Dorsolateral prefrontal cortex (tissue), 120 donors: ENCODE measurements at regions of chr15 and their contacts with region 1.

Region 1: GRCh38 chr15:75727851-75728715 is 15.4 kb upstream of the CSPG4 start:
- DNase-seq: peak; percentile 48 to 76 (median 69)
- H3K4me3 ChIP-seq: no peak overlapping the region
- H3K27ac ChIP-seq: no peak overlapping the region
- H3K27me3 ChIP-seq: no peaks in the 10 kb centered on the region
- CTCF ChIP-seq: peak in 55 of 56 donors; percentile 21 to 72 (median 57)

Region 2: DNA sequence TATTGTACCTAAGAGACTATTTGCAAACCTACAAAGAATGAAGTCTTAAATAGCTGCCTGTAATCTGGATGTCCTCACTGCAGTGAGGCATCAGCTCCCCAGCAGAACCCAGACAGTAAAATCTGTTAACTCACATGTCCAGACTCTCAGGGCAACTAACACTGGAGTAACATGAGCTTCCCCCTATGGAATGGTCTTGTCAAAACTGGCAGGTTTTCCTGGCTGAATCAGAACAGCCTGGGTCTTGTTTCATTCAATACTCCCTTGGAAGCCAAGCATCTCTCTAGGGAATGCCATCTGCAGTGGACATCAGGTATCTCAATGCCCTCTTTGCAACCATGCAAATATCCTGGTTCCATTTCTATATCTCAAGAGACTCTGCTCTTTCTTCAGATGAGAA is 173.4 kb before region 1 on chr15:
- intact Hi-C with region 1: no loop called
- DNase-seq: no peak
- H3K4me3 ChIP-seq: no peak overlapping the region
- H3K27ac ChIP-seq: no peak overlapping the region
- H3K27me3 ChIP-seq: no peaks in the 10 kb centered on the region
- CTCF ChIP-seq: no peak

Region 3: GRCh38 chr15:75750261-75751050 is 22.4 kb after region 1 on chr15:
- intact Hi-C with region 1: no loop called
- DNase-seq: peak in 3 of 10 donors; percentile 11 to 15 (median 14)
- H3K4me3 ChIP-seq: no peak overlapping the region
- H3K27ac ChIP-seq: no peak overlapping the region
- H3K27me3 ChIP-seq: no peaks in the 10 kb centered on the region
- CTCF ChIP-seq: no peak

Region 4: GRCh38 chr15:75775296-75776064 is 47.4 kb after region 1 on chr15:
- intact Hi-C with region 1: no loop called
- DNase-seq: no peak
- H3K4me3 ChIP-seq: no peak overlapping the region
- H3K27ac ChIP-seq: no peak overlapping the region
- H3K27me3 ChIP-seq: peaks cover 0 to 4% (median 0%) of the 10 kb centered on the region in 45 donors
- CTCF ChIP-seq: no peak

Region 5: GRCh38 chr15:75785771-75786574 is 57.9 kb after region 1 on chr15:
- intact Hi-C with region 1: no loop called
- DNase-seq: peak in 3 of 10 donors; percentile 11 to 45 (median 20)
- H3K4me3 ChIP-seq: peak overlapping the region in 10 of 59 donors; percentile 0 to 34 (median 22)
- H3K27ac ChIP-seq: no peak overlapping the region
- H3K27me3 ChIP-seq: peaks cover 0 to 15% (median 0%) of the 10 kb centered on the region in 45 donors
- CTCF ChIP-seq: peak in 1 of 56 donors; percentile 5

Region 6: GRCh38 chr15:75801859-75802593 is 73.9 kb after region 1 on chr15:
- intact Hi-C with region 1: loop called in 1 of 2 experiments (anchors 5 kb)
- DNase-seq: peak; percentile 56 to 81 (median 66)
- H3K4me3 ChIP-seq: peak overlapping the region in 52 of 59 donors; percentile 20 to 66 (median 42)
- H3K27ac ChIP-seq: no peak overlapping the region
- H3K27me3 ChIP-seq: peaks cover 0 to 16% (median 0%) of the 10 kb centered on the region in 45 donors
- CTCF ChIP-seq: peak; percentile 44 to 97 (median 91)